A673 (cell line): ENCODE measurements at regions of chr11 and their contacts with region 1.

Region 1: GRCh38 chr11:65274735-65275682 is 13.2 kb downstream of the POLA2 start:
- DNase-seq: peak; percentile 82
- H3K4me3 ChIP-seq: no peak overlapping the region
- H3K27ac ChIP-seq: no peak overlapping the region
- H3K4me1 ChIP-seq: peaks cover 25% of the 10 kb centered on the region
- H3K27me3 ChIP-seq: no peaks in the 10 kb centered on the region
- CTCF ChIP-seq: peak; percentile 86

Region 2: GRCh38 chr11:65180877-65181568 is 94.0 kb before region 1 on chr11:
- CTCF ChIA-PET with region 1: interaction called, 11 read pairs
- POLR2A ChIA-PET with region 1: no interaction called
- intact Hi-C with region 1: no loop called
- DNase-seq: peak; percentile 79
- H3K4me3 ChIP-seq: peak overlapping the region; percentile 94
- H3K27ac ChIP-seq: peak overlapping the region; percentile 50
- H3K4me1 ChIP-seq: peaks cover 11% of the 10 kb centered on the region
- H3K27me3 ChIP-seq: no peaks in the 10 kb centered on the region
- CTCF ChIP-seq: peak; percentile 54

Region 3: DNA sequence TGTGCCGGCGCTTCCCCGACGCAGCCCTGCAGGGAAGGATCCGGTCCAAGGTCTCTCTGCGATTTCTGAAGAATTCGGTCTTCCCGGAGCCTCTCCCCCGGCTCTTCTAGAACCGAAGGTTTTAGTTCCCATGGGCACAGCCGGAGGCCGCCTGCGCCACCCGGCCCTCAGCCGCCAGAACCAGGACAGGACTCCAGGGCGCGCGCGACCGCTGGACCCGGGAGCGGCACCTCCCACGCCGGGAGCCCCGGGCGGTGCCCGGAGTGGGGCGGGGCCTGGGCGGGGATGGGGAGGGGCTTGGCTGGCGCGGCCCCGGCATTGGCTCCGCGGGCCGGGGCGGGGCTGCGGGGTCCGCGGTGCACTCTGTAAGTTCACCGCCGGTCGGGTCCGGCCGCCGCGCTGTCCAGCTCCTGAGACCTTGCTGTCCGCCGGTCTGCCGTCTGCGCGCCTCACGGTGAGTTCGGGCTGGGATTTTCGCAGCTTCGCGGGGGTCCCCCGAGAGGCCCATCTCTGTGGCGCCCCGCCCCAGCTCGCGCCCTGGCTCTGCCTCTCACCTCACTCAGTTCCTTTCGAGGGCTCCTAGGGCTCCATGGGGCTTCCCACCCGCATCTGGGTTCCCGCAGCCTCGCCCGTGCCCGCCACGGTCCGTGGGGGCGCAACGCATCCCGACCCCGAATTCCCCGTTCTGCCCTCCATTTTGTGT is 39.6 kb after region 1 on chr11 and contains the start of gene CDC42EP2:
- CTCF ChIA-PET with region 1: interaction called, 30 read pairs
- POLR2A ChIA-PET with region 1: no interaction called
- intact Hi-C with region 1: loop called (anchors 1 kb)
- DNase-seq: peak; percentile 85
- H3K4me3 ChIP-seq: peak within 1 kb of the TSS; percentile 80
- H3K27ac ChIP-seq: peak within 1 kb of the TSS; percentile 71
- H3K4me1 ChIP-seq: peaks cover 15% of the 10 kb centered on the region
- H3K27me3 ChIP-seq: no peaks in the 10 kb centered on the region
- CTCF ChIP-seq: no peak
- total RNA-seq, gene CDC42EP2: 4.8 and 5.4 TPM in 2 replicates

Region 4: DNA sequence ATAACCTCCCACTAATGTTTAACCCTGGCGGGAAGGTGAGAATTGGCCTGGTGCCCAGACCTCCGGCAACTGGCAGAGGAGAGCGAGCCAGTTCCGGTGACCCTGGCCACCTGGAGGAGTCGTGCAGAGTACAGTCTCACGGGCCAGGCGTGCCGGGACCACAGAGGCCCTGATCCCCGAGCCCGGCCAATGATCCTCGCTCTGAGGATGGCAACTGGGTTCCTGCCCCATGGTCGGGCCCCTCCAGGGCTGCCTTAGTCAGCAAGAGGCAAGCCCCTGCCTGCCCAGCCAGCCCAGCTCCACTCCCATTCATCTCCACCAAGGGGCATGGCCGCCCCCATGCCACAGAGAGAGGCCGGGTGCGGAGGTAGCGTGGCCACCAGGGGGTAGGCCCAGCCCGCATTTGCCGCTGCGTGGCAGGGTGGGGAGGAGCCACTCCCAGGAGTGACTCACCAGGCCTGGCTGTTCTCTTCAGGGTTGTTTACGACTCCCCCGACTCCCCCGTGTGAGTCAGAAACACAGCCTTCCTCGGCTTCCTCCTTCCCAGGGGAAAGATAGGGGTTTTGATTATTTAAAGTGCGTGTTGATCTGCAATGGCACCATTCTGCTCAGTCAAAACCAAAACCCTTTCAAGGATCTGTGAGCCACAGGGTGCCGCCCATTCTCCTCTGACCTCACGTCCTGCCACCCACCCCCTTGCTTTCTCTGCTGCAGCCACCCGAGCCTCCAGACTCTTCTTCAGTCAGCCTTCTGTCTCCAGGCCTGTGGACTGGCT is 107.2 kb after region 1 on chr11 and contains the start of gene SLC25A45:
- CTCF ChIA-PET with region 1: no interaction called
- POLR2A ChIA-PET with region 1: no interaction called
- intact Hi-C with region 1: no loop called
- DNase-seq: peak; percentile 99
- H3K4me3 ChIP-seq: peak within 1 kb of the TSS; percentile 40
- H3K27ac ChIP-seq: peak within 1 kb of the TSS; percentile 94
- H3K4me1 ChIP-seq: peaks cover 40% of the 10 kb centered on the region
- H3K27me3 ChIP-seq: no peaks in the 10 kb centered on the region
- CTCF ChIP-seq: peak; percentile 82
- total RNA-seq, gene SLC25A45: 5.3 and 7.4 TPM in 2 replicates

Region 5: DNA sequence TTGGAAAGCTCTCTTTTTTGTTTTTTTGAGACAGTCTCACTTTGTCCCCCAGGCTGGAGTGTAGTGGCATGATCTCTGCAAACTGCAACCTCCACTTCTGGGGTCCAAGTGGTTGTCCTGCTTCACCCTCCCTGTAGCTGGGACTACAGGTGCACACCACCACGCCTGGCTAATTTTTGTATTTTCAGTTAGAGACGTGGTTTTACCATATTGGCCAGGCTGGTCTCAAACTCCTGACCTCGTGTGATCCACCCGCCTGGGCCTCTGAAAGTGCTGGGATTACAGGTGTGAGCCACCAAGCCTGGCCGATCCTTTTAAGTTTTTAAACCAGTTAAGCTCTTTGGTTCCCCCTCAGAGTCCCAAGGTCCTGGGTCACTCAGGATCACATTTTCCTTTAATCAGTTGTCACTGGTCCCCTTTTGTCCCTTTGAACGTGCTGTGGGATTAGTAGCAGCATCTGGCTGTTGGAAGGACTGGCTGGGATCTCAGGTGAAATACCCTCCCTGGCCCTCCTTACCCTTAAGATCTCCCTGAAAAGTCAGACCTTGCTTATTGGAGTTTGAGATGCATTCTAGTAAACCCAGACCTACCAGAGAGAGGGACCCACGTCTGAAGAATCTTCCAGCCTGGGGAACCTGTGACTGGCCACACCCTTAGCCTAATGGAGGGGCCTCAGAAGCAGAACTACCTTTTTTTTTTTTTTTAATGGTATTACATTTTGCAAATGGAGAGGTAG is 231.9 kb after region 1 on chr11:
- CTCF ChIA-PET with region 1: interaction called, 10 read pairs
- POLR2A ChIA-PET with region 1: no interaction called
- intact Hi-C with region 1: loop called (anchors 2 kb)
- DNase-seq: peak; percentile 70
- H3K4me3 ChIP-seq: peak overlapping the region; percentile 85
- H3K27ac ChIP-seq: peak overlapping the region; percentile 72
- H3K4me1 ChIP-seq: peaks cover 33% of the 10 kb centered on the region
- H3K27me3 ChIP-seq: no peaks in the 10 kb centered on the region
- CTCF ChIP-seq: no peak

Region 6: GRCh38 chr11:66302656-66303055 is 1027.6 kb after region 1 on chr11:
- CTCF ChIA-PET with region 1: interaction called, 10 read pairs
- POLR2A ChIA-PET with region 1: no interaction called
- intact Hi-C with region 1: no loop called
- DNase-seq: no peak
- H3K4me3 ChIP-seq: no peak overlapping the region
- H3K27ac ChIP-seq: no peak overlapping the region
- H3K4me1 ChIP-seq: no peaks in the 10 kb centered on the region
- H3K27me3 ChIP-seq: no peaks in the 10 kb centered on the region
- CTCF ChIP-seq: no peak